Posterior vena cava (tissue), 2 donors: ENCODE measurements at regions of chr22 and their contacts with region 1.

Region 1: DNA sequence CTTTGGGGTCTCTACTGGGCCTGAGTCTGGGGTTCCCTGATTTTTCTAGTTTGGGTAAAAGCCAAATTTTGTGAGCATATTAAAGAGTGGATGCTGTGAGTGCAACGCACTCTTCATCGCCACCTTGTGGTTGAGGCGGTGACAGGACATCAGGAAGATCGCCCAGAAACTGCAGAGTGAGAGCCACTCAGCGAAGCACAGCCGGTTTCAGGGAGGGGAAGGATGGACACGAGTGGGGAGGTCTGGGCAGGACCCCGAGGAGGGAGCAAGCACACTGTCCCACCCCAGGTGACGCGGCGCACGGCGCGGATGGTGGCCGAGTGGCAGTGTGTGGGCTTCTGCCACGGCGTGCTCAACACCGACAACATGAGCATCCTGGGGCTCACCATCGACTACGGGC is 9.1 kb downstream of the SELENOO start:
- DNase-seq: no peak

Region 2: DNA sequence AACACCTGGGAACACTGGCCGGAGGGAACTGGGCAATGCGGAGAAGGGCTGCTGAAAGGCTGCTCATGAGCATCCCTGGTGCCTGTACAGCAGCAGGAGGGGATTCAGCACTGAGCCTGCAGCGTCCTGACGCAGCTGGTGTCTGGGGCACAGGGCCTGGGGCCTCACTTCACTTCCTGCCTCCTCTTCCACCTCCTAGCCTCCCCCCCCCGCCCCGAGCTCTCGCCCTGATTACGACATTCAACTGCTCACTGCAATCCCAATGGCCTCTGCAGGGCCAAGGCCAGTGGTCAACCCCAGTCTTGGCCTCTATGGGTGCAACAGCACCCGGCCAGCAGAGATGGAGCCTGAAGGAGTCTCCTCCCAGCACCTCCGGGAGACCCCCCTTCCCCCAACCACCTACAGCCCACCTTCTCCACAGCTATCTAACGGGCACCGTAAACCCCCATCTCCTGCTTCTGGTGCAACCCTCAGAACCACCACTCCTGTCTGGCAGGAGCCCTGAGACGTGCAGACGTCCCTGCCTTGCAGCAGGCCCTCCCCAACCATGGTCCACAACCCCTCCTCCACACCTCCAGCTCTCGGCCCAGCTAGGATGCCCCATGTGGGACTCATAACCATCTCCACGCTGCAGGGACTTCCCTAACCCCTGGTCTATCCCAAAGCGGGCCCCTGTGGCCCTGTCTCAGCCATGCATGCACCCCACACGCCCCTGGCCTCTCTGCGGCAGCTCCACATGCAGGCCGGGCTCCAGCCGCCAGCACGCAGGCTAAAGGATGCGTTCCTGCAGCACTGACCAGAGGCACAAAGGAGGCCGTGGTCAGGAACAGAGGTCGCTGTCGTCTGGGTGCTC is 420.4 kb before region 1 on chr22:
- intact Hi-C with region 1: loop called in 1 of 2 experiments (anchors 10 kb)
- DNase-seq: no peak

Region 3: GRCh38 chr22:50089682-50090411 is 120.0 kb before region 1 on chr22 and contains the start of gene MOV10L1:
- intact Hi-C with region 1: no loop called
- DNase-seq: no peak
- total RNA-seq, gene MOV10L1: 0.43 to 0.56 TPM

Region 4: GRCh38 chr22:50148991-50149721 is 60.7 kb before region 1 on chr22:
- intact Hi-C with region 1: loop called (anchors 2 to 5 kb)
- DNase-seq: peak; percentile 87

Region 5: GRCh38 chr22:50361688-50362087 is 151.8 kb after region 1 on chr22:
- intact Hi-C with region 1: no loop called
- DNase-seq: no peak